Activated CD4-positive, alpha-beta T cell treated with anti-CD3 and anti-CD28 coated beads for 36 hours (primary cell): ENCODE measurements at regions of chr19 and their contacts with region 1.

Region 1: GRCh38 chr19:5827891-5828660 is 11.4 kb downstream of the FUT6 start:
- DNase-seq: peak; percentile 98
- ATAC-seq: peak; percentile 84
- H3K4me3 Mint-ChIP-seq: peak overlapping the region; percentile 92
- H3K27ac Mint-ChIP-seq: peak overlapping the region; percentile 96
- H3K4me1 Mint-ChIP-seq: peaks cover 4% of the 10 kb centered on the region
- H3K27me3 Mint-ChIP-seq: no peaks in the 10 kb centered on the region

Region 2: GRCh38 chr19:5622463-5623396 is 205.3 kb before region 1 on chr19 and contains the starts of genes SAFB and SAFB2:
- CTCF ChIA-PET with region 1: no interaction called
- POLR2A ChIA-PET with region 1: no interaction called
- intact Hi-C with region 1: loop called in 1 of 2 experiments (anchors 1 kb)
- DNase-seq: peak; percentile 100
- ATAC-seq: peak; percentile 92
- H3K4me3 Mint-ChIP-seq: peak within 1 kb of the TSS; percentile 100
- H3K27ac Mint-ChIP-seq: peak within 1 kb of the TSS; percentile 100
- H3K4me1 Mint-ChIP-seq: peaks cover 66% of the 10 kb centered on the region
- H3K27me3 Mint-ChIP-seq: no peaks in the 10 kb centered on the region
- total RNA-seq, gene SAFB: 100 to 118 TPM
- total RNA-seq, gene SAFB2: 65.0 to 78.6 TPM

Region 3: DNA sequence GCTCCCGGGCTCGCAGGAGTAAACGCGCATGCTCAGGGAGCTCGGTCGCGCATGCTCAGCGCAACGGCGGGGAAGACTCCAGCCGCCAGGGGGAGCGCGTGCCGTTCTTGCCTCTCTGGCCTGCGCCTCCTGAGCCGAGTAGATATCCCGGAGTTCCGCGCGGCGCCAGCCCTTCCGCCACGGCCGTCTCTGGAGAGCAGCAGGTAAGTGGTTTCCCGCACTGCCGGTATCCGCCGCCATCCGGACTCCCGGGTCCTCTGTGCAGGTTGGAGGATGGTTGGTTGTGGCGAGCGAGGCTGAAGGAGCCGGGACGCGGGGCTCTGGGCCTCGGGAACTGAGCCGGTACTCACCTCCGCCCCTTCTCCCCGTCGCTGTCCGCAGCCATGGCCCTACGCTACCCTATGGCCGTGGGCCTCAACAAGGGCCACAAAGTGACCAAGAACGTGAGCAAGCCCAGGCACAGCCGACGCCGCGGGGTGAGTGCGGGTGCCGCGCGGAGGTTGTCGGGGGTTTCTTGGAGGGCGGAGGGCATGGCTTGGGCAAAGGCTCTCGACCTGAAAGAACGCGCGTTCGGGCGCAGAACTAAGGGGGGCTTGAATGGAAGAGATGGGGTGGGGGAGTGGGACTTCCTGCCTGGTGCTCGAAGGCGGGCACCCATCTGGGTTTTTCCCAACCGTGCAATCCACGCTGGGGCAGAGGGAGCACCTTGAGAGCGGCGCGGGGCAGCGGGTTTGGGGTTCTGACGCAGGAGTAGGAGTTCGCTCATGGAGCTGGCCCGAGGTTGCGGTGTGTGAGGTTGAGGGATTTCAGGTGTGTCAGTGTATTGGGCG is 137.7 kb before region 1 on chr19 and contains the start of gene RPL36:
- CTCF ChIA-PET with region 1: no interaction called
- POLR2A ChIA-PET with region 1: no interaction called
- intact Hi-C with region 1: loop called in 1 of 2 experiments (anchors 1 kb)
- DNase-seq: peak; percentile 100
- ATAC-seq: peak; percentile 54
- H3K4me3 Mint-ChIP-seq: peak within 1 kb of the TSS; percentile 100
- H3K27ac Mint-ChIP-seq: peak within 1 kb of the TSS; percentile 96
- H3K4me1 Mint-ChIP-seq: peaks cover 21% of the 10 kb centered on the region
- H3K27me3 Mint-ChIP-seq: no peaks in the 10 kb centered on the region
- total RNA-seq, gene RPL36: 1,452 to 1,530 TPM

Region 4: GRCh38 chr19:5953680-5954213 is 125.7 kb after region 1 on chr19:
- CTCF ChIA-PET with region 1: no interaction called
- POLR2A ChIA-PET with region 1: no interaction called
- intact Hi-C with region 1: loop called in 1 of 2 experiments (anchors 2 kb)
- DNase-seq: peak; percentile 72
- ATAC-seq: peak; percentile 35
- H3K4me3 Mint-ChIP-seq: peak overlapping the region; percentile 53
- H3K27ac Mint-ChIP-seq: peak overlapping the region; percentile 98
- H3K4me1 Mint-ChIP-seq: peaks cover 93% of the 10 kb centered on the region
- H3K27me3 Mint-ChIP-seq: no peaks in the 10 kb centered on the region